PC-3 (cell line): ENCODE measurements at regions of chr1 and their contacts with region 1.

Region 1: GRCh38 chr1:119743781-119744597 is 24.7 kb downstream of the HMGCS2 start:
- DNase-seq: peak; percentile 81
- ATAC-seq: peak; percentile 72
- H3K4me3 ChIP-seq: no peak overlapping the region
- H3K27ac ChIP-seq: no peak overlapping the region
- H3K4me1 ChIP-seq: no peaks in the 10 kb centered on the region
- H3K27me3 ChIP-seq: no peaks in the 10 kb centered on the region
- CTCF ChIP-seq: peak; percentile 92

Region 2: GRCh38 chr1:119779869-119780356 is 35.9 kb after region 1 on chr1:
- CTCF ChIA-PET with region 1: no interaction called
- POLR2A ChIA-PET with region 1: no interaction called
- intact Hi-C with region 1: loop called (anchors 2 kb)
- DNase-seq: peak; percentile 70
- ATAC-seq: peak; percentile 42
- H3K4me3 ChIP-seq: peak overlapping the region; percentile 46
- H3K27ac ChIP-seq: peak overlapping the region; percentile 27
- H3K4me1 ChIP-seq: peaks cover 44% of the 10 kb centered on the region
- H3K27me3 ChIP-seq: no peaks in the 10 kb centered on the region
- CTCF ChIP-seq: no peak

Region 3: GRCh38 chr1:119870917-119871596 is 127.1 kb after region 1 on chr1:
- CTCF ChIA-PET with region 1: no interaction called
- POLR2A ChIA-PET with region 1: no interaction called
- intact Hi-C with region 1: loop called (anchors 2 kb)
- DNase-seq: peak; percentile 92
- ATAC-seq: peak; percentile 63
- H3K4me3 ChIP-seq: no peak overlapping the region
- H3K27ac ChIP-seq: no peak overlapping the region
- H3K4me1 ChIP-seq: peaks cover 17% of the 10 kb centered on the region
- H3K27me3 ChIP-seq: no peaks in the 10 kb centered on the region
- CTCF ChIP-seq: peak; percentile 97